Activated CD4-positive, alpha-beta T cell treated with anti-CD3 and anti-CD28 coated beads for 36 hours (primary cell): ENCODE measurements at regions of chr15 and their contacts with region 1.

Region 1: GRCh38 chr15:45587095-45587860 is at the start of gene BLOC1S6:
- DNase-seq: peak; percentile 91
- ATAC-seq: peak; percentile 81
- H3K4me3 Mint-ChIP-seq: peak within 1 kb of the TSS; percentile 94
- H3K27ac Mint-ChIP-seq: peak within 1 kb of the TSS; percentile 100
- H3K4me1 Mint-ChIP-seq: peaks cover 48% of the 10 kb centered on the region
- H3K27me3 Mint-ChIP-seq: no peaks in the 10 kb centered on the region
- total RNA-seq, gene BLOC1S6: 36.1 to 52.5 TPM

Region 2: GRCh38 chr15:45522328-45523160 is 64.7 kb before region 1 on chr15 and contains the start of gene SLC30A4:
- CTCF ChIA-PET with region 1: no interaction called
- POLR2A ChIA-PET with region 1: no interaction called
- intact Hi-C with region 1: loop called (anchors 1 kb)
- DNase-seq: peak; percentile 65
- ATAC-seq: peak; percentile 90
- H3K4me3 Mint-ChIP-seq: peak within 1 kb of the TSS; percentile 89
- H3K27ac Mint-ChIP-seq: peak within 1 kb of the TSS; percentile 67
- H3K4me1 Mint-ChIP-seq: peaks cover 17% of the 10 kb centered on the region
- H3K27me3 Mint-ChIP-seq: peaks cover 2% of the 10 kb centered on the region
- total RNA-seq, gene SLC30A4: 1.6 to 1.9 TPM

Region 3: GRCh38 chr15:45634442-45635190 is 47.3 kb after region 1 on chr15 and contains the start of gene SQOR:
- CTCF ChIA-PET with region 1: interaction called, 4 read pairs
- POLR2A ChIA-PET with region 1: interaction called, 8 read pairs
- intact Hi-C with region 1: loop called (anchors 1 to 2 kb)
- DNase-seq: peak; percentile 86
- ATAC-seq: peak; percentile 66
- H3K4me3 Mint-ChIP-seq: peak within 1 kb of the TSS; percentile 96
- H3K27ac Mint-ChIP-seq: peak within 1 kb of the TSS; percentile 90
- H3K4me1 Mint-ChIP-seq: peaks cover 32% of the 10 kb centered on the region
- H3K27me3 Mint-ChIP-seq: no peaks in the 10 kb centered on the region
- total RNA-seq, gene SQOR: 105 to 108 TPM